ENCODE measurements at regions of chr10 and their contacts with region 1.

Region 1: DNA sequence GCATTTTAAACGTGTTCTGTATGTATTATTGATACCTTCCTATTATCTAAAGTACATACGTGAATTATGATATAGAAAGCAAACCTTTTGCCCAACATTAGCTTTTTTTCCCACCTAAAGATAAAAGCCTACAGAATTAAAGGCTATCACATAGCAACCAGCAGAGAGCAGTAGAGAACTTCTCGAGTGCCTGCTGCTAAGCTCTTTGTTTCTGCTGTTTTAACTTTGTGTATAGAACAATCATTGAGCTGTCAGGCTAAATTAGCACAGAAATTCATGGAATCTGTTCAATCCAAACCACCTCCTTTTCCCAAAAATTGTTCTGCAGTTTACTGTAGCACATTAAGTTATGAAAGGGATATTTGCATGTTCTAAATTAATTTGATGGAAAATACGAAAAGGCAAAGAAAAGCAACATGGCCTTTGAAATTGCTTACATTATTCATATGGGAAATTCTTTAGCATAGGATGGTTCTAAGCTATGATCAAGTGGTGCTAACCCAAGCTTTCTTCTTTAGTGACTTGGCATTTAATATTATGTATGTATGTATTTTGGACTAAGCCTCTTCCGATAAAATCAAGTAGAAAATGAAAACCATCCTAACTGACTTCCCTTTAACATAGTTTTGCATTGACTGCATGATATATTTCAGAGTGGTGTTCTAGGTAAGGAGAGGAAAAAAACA is 1288.5 kb downstream of the GATA3 start:
- DNase-seq: peak; percentile 6
- H3K4me3 ChIP-seq: no peak overlapping the region
- H3K27ac ChIP-seq: no peak overlapping the region
- H3K4me1 ChIP-seq: no peaks in the 10 kb centered on the region
- H3K27me3 ChIP-seq: no peaks in the 10 kb centered on the region
- CTCF ChIP-seq: peak; percentile 67 to 72

Region 2: GRCh38 chr10:8498884-8499283 is 844.1 kb before region 1 on chr10:
- CTCF ChIA-PET with region 1: no interaction called
- dilution Hi-C with region 1: no loop called
- in situ Hi-C with region 1: no loop called
- intact Hi-C with region 1: no loop called
- DNase-seq: peak; percentile 48
- H3K4me3 ChIP-seq: no peak overlapping the region
- H3K27ac ChIP-seq: no peak overlapping the region
- H3K4me1 ChIP-seq: no peaks in the 10 kb centered on the region
- H3K27me3 ChIP-seq: peaks cover 1% of the 10 kb centered on the region
- CTCF ChIP-seq: no peak

Region 3: GRCh38 chr10:10677479-10677878 is 1334.5 kb after region 1 on chr10:
- CTCF ChIA-PET with region 1: no interaction called
- dilution Hi-C with region 1: no loop called
- in situ Hi-C with region 1: no loop called
- intact Hi-C with region 1: loop called (anchors 10 kb)
- DNase-seq: peak; percentile 5
- H3K4me3 ChIP-seq: no peak overlapping the region
- H3K27ac ChIP-seq: no peak overlapping the region
- H3K4me1 ChIP-seq: no peaks in the 10 kb centered on the region
- H3K27me3 ChIP-seq: no peaks in the 10 kb centered on the region
- CTCF ChIP-seq: peak; percentile 18 to 47

Region 4: DNA sequence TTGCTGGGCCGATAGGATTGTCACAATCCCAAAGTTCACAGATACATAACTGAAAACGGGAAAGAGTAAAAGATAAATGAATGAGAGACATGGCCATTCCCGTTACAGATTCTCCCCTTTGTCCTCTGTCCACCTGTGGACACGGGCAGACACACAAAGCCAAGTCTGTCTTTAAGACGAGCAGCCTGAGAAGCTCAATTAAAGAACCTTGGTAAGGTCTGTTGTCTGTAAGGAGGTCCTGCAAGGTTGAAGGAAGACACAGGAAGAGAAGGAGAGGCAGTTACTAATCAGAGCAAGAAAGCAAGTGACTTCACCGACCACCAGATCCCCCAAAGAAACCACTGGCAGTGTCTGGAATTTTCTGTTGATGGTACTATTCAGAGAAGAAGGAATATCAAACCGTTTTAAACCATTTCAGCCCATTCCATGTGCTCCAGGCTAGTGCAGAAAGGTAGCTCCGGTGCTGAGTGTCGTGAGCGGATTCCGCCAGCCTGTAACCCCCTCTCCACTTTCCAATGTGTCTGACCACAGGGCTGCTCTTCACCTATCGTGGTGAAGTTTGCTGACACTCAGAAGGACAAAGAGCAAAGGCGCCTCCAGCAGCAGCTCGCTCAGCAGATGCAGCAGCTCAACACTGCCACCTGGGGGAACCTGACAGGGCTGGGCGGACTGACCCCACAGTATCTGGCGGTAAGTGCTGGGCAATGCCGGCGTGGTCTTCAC is 1927.3 kb after region 1 on chr10:
- CTCF ChIA-PET with region 1: no interaction called
- dilution Hi-C with region 1: no loop called
- in situ Hi-C with region 1: no loop called
- intact Hi-C with region 1: loop called (anchors 2 kb)
- DNase-seq: peak; percentile 7
- H3K4me3 ChIP-seq: no peak overlapping the region
- H3K27ac ChIP-seq: no peak overlapping the region
- H3K4me1 ChIP-seq: no peaks in the 10 kb centered on the region
- H3K27me3 ChIP-seq: no peaks in the 10 kb centered on the region
- CTCF ChIP-seq: peak; percentile 50 to 76

Measured in mammary epithelial cell (primary cell).